H1 (cell line): ENCODE measurements at regions of chr7 and their contacts with region 1.

Region 1: GRCh38 chr7:74059681-74060578 is 23.7 kb upstream of the LIMK1 start:
- DNase-seq: no peak
- H3K4me3 ChIP-seq: no peak overlapping the region
- H3K27ac ChIP-seq: no peak overlapping the region
- H3K4me1 ChIP-seq: no peaks in the 10 kb centered on the region; a peak in 2 of 7 replicates
- H3K27me3 ChIP-seq: peaks cover 0 to 3% (median 0%) of the 10 kb centered on the region in 4 experiments; a peak in 1 of 7 replicates
- CTCF ChIP-seq: peak in 2 of 3 experiments; percentile 2 to 21; a peak in 2 of 4 replicates
- EP300 ChIP-seq: no peak
- POLR2A ChIP-seq: no peak
- RAD21 ChIP-seq: peak in 1 of 2 experiments; percentile 12; a peak in 1 of 4 replicates

Region 2: GRCh38 chr7:73701357-73701995 is 358.5 kb before region 1 on chr7:
- CTCF ChIA-PET with region 1: no interaction called
- POLR2A ChIA-PET with region 1: no interaction called
- DNase-seq: peak; percentile 53 to 92
- H3K4me3 ChIP-seq: no peak overlapping the region
- H3K27ac ChIP-seq: no peak overlapping the region
- H3K4me1 ChIP-seq: peaks cover 0 to 19% (median 15%) of the 10 kb centered on the region in 4 experiments; a peak in 6 of 7 replicates
- H3K27me3 ChIP-seq: no peaks in the 10 kb centered on the region; a peak in 1 of 7 replicates
- CTCF ChIP-seq: peak in 2 of 3 experiments; percentile 75 to 91; a peak in 3 of 4 replicates
- EP300 ChIP-seq: no peak
- POLR2A ChIP-seq: no peak
- RAD21 ChIP-seq: peak; percentile 65 to 66

Region 3: DNA sequence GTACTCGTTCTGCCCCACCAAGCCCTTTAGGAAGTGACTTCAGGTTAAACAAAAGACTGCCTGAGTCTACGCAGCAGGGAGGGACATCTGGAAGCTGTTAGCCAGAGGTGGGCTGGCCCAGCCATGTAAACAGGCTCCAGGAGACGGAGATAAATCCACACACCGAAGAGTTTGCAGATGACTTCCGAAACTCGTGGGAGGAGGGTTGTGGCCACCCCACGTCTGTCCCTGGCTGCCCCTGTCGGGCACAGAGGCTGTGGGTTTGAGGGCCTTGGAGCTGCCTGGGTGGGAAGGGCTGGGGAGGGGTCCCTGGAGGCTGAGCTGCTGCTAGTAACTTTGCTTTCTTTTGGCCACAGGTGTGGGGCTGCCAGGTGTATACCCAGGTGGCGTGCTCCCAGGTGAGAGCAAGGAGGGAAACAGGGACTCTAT is 16.4 kb before region 1 on chr7:
- CTCF ChIA-PET with region 1: interaction called, 12 read pairs
- POLR2A ChIA-PET with region 1: interaction called, 3 read pairs
- DNase-seq: no peak
- H3K4me3 ChIP-seq: peak overlapping the region in 1 of 4 experiments; percentile 26; a peak in 1 of 8 replicates
- H3K27ac ChIP-seq: peak overlapping the region; percentile 52; the same call in 1 of the 2 replicates
- H3K4me1 ChIP-seq: peaks cover 0 to 22% (median 18%) of the 10 kb centered on the region in 4 experiments; a peak in 6 of 7 replicates
- H3K27me3 ChIP-seq: no peaks in the 10 kb centered on the region
- CTCF ChIP-seq: no peak
- EP300 ChIP-seq: peak in 1 of 2 experiments; percentile 49; a peak in 1 of 3 replicates
- POLR2A ChIP-seq: 0 out of 3 replicates have a peak, but pooled peaks of 1 of the 2 experiments have one; percentile 29
- RAD21 ChIP-seq: no peak

Region 4: GRCh38 chr7:74129887-74130286 is 70.0 kb after region 1 on chr7:
- CTCF ChIA-PET with region 1: no interaction called
- POLR2A ChIA-PET with region 1: no interaction called
- DNase-seq: no peak
- H3K4me3 ChIP-seq: no peak overlapping the region
- H3K27ac ChIP-seq: no peak overlapping the region
- H3K4me1 ChIP-seq: peaks cover 0 to 3% (median 0%) of the 10 kb centered on the region in 4 experiments; a peak in 1 of 7 replicates
- H3K27me3 ChIP-seq: no peaks in the 10 kb centered on the region
- CTCF ChIP-seq: no peak
- EP300 ChIP-seq: no peak
- POLR2A ChIP-seq: no peak
- RAD21 ChIP-seq: no peak